ENCODE measurements at regions of chr17 and their contacts with region 1.

Region 1: GRCh38 chr17:58517734-58518609 is 3.5 kb upstream of the MTMR4 start:
- DNase-seq: peak; percentile 100
- ATAC-seq: peak; percentile 80
- H3K4me3 ChIP-seq: peak overlapping the region; percentile 72 to 85
- H3K27ac ChIP-seq: peak overlapping the region; percentile 76
- H3K4me1 ChIP-seq: peaks cover 21 to 41% of the 10 kb centered on the region in 2 experiments
- H3K27me3 ChIP-seq: no peaks in the 10 kb centered on the region
- CTCF ChIP-seq: no peak
- POLR2A ChIP-seq: peak; percentile 42
- RAD21 ChIP-seq: no peak

Region 2: GRCh38 chr17:58493491-58493890 is 24.5 kb before region 1 on chr17:
- CTCF ChIA-PET with region 1: no interaction called
- POLR2A ChIA-PET with region 1: no interaction called
- RAD21 ChIA-PET with region 1: no interaction called
- intact Hi-C with region 1: no loop called
- DNase-seq: no peak
- ATAC-seq: no peak
- H3K4me3 ChIP-seq: no peak overlapping the region
- H3K27ac ChIP-seq: no peak overlapping the region
- H3K4me1 ChIP-seq: no peaks in the 10 kb centered on the region
- H3K27me3 ChIP-seq: no peaks in the 10 kb centered on the region
- CTCF ChIP-seq: no peak
- POLR2A ChIP-seq: no peak
- RAD21 ChIP-seq: no peak

Region 3: DNA sequence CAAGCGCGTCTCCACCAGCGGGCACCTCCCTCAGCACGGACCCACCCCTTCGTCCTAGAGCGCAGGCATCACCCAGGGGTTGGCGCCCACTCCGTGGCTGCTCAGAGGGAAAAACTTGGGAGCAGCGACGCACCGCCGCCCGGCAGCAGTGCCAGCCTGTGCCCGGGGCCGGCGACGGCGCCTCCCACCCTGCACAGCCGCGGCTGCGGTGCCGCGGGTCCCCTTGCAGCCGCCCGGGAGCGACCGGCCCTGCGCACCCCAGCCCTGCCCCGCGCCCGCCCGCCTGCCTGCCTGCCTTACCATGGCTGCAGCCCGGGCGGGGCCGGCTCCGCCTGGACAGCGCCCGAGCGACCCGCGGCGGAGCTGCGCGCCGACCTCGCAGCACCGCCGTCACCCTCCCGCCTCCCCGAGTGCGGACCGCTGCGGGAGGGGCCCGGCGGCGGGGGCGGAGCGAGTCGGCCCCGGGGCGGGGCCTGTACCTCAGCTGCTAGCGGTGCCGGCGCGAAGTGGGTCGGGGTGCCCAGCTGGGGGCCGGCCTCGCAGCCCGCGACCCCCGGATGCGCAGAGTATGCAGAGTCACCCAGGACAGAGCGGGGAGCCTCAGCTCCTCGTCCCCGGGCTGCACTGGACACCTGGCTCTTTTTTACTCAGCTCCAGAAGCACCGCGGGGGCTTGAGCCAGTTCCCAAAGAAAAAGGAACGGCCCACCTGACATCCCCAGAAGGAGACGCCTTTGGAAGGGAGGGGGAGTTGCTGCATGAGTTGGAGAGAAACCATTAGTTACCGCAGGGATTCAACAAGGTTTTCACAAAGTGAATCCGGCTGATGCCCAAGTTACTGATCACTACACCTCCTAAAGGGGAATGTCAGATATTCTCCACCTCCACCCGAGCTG is 13.9 kb after region 1 on chr17:
- CTCF ChIA-PET with region 1: interaction called, 15 read pairs
- POLR2A ChIA-PET with region 1: interaction called, 5 read pairs
- RAD21 ChIA-PET with region 1: interaction called in 1 of 2 experiments, 3 read pairs
- intact Hi-C with region 1: no loop called
- DNase-seq: no peak
- ATAC-seq: peak; percentile 84
- H3K4me3 ChIP-seq: peak overlapping the region; percentile 34 to 56
- H3K27ac ChIP-seq: peak overlapping the region; percentile 14; the same call in 1 of the 2 replicates
- H3K4me1 ChIP-seq: peaks cover 25 to 46% of the 10 kb centered on the region in 2 experiments
- H3K27me3 ChIP-seq: no peaks in the 10 kb centered on the region; the same call in 1 of the 2 replicates
- CTCF ChIP-seq: no peak
- POLR2A ChIP-seq: no peak
- RAD21 ChIP-seq: no peak

Region 4: GRCh38 chr17:58679263-58680037 is 161.5 kb after region 1 on chr17:
- CTCF ChIA-PET with region 1: interaction called, 4 read pairs
- POLR2A ChIA-PET with region 1: interaction called, 13 read pairs
- RAD21 ChIA-PET with region 1: interaction called in 1 of 2 experiments, 8 read pairs
- intact Hi-C with region 1: loop called (anchors 1 kb)
- DNase-seq: peak; percentile 100
- ATAC-seq: peak; percentile 90
- H3K4me3 ChIP-seq: no peak overlapping the region
- H3K27ac ChIP-seq: no peak overlapping the region
- H3K4me1 ChIP-seq: peaks cover 0 to 20% of the 10 kb centered on the region in 2 experiments; a peak in 2 of 4 replicates
- H3K27me3 ChIP-seq: no peaks in the 10 kb centered on the region
- CTCF ChIP-seq: peak in 2 of 3 experiments; percentile 4 to 34; a peak in 2 of 6 replicates
- POLR2A ChIP-seq: peak; percentile 100
- RAD21 ChIP-seq: 0 out of 2 replicates have a peak, but pooled peaks have one; percentile 38

Region 5: GRCh38 chr17:59004338-59005111 is 486.6 kb after region 1 on chr17:
- CTCF ChIA-PET with region 1: interaction called, 26 read pairs
- POLR2A ChIA-PET with region 1: no interaction called
- RAD21 ChIA-PET with region 1: interaction called, 4 to 6 read pairs
- intact Hi-C with region 1: loop called (anchors 1 kb)
- DNase-seq: peak; percentile 59
- ATAC-seq: peak; percentile 88
- H3K4me3 ChIP-seq: no peak overlapping the region
- H3K27ac ChIP-seq: no peak overlapping the region
- H3K4me1 ChIP-seq: no peaks in the 10 kb centered on the region
- H3K27me3 ChIP-seq: no peaks in the 10 kb centered on the region
- CTCF ChIP-seq: peak; percentile 91 to 99 (median 98)
- POLR2A ChIP-seq: no peak
- RAD21 ChIP-seq: peak; percentile 97

Region 6: DNA sequence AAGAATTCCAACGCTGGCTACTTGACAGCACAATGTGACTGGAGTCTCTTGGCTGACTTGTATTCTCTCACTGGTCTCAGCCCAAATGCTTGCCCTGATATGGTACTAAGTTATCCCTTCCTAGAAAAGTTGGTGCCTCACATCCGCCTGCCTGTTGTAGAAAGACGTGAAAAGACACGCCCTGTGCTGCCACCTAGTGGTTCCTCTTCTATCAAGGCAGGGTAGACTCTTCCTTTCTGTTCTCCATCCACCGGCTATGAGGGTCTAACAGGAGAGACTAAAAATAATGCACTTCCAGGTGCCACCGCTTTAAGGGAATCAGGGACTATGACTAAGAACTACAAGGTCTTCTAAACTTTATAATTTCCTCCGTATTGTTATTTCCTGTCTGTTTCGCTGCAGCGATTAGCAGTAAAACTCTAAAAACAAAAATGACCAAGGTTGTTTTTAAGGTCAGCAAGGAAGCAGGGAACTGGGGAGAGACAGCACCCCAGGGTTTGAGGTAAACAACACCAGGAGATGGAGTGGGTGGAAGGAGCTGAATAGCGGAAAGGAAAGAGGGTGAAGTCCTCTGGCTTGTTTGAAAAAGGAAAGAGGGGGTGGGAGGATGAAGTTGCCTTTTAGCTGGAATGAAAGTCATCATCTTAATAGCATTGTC is 922.9 kb after region 1 on chr17:
- CTCF ChIA-PET with region 1: no interaction called
- POLR2A ChIA-PET with region 1: no interaction called
- RAD21 ChIA-PET with region 1: no interaction called
- intact Hi-C with region 1: loop called (anchors 5 kb)
- DNase-seq: peak; percentile 93
- ATAC-seq: peak; percentile 100
- H3K4me3 ChIP-seq: no peak overlapping the region
- H3K27ac ChIP-seq: no peak overlapping the region
- H3K4me1 ChIP-seq: no peaks in the 10 kb centered on the region
- H3K27me3 ChIP-seq: no peaks in the 10 kb centered on the region
- CTCF ChIP-seq: peak; percentile 97 to 98 (median 97)
- POLR2A ChIP-seq: no peak
- RAD21 ChIP-seq: peak; percentile 99